ENCODE measurements at regions of chr7 and their contacts with region 1.

Region 1: GRCh38 chr7:131040467-131040932 is 287.2 kb upstream of the MKLN1 start:
- DNase-seq: no peak
- ATAC-seq: peak; percentile 83
- H3K4me3 ChIP-seq: no peak overlapping the region
- H3K27ac ChIP-seq: peak overlapping the region; percentile 72
- H3K4me1 ChIP-seq: peaks cover 22% of the 10 kb centered on the region
- H3K27me3 ChIP-seq: no peaks in the 10 kb centered on the region
- CTCF ChIP-seq: peak; percentile 84 to 96 (median 88)
- EP300 ChIP-seq: no peak
- POLR2A ChIP-seq: no peak
- RAD21 ChIP-seq: peak; percentile 97

Region 2: DNA sequence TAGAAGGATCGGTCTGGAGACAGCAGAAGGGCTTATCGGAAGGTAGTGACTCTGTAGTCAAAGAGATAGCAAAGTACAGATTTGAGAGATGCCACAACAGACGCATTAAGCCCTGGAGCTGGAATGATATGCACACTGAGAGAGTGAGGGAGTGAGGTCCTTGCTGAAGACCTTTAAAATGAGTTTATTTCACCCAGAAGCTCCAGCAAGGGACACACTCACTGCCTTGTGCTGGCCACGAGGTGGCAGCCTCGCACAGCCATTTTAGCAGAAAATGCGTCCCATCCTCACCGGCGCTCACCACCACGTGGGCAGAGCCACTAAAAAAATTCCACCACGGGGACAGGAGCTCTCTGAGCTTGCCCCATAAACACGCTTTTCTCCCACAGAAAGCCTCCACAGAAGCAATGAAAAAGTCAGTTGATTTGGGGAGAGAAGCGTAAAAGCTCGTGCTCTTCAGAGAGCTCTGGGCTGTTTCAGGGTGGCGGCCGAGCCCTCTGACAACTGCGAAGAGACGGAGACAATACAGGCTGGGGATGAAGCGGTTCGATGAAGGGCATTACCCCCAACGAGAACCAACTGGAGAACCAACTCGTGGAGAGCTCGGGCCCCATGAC is 143.5 kb before region 1 on chr7:
- CTCF ChIA-PET with region 1: interaction called, 166 read pairs
- POLR2A ChIA-PET with region 1: interaction called, 5 read pairs
- RAD21 ChIA-PET with region 1: interaction called, 77 read pairs
- SMC1A ChIA-PET with region 1: interaction called, 84 read pairs
- in situ Hi-C with region 1: loop called (anchors 5 kb)
- intact Hi-C with region 1: loop called (anchors 1 kb)
- DNase-seq: no peak
- ATAC-seq: peak; percentile 83
- H3K4me3 ChIP-seq: no peak overlapping the region
- H3K27ac ChIP-seq: no peak overlapping the region
- H3K4me1 ChIP-seq: peaks cover 51% of the 10 kb centered on the region
- H3K27me3 ChIP-seq: no peaks in the 10 kb centered on the region
- CTCF ChIP-seq: peak; percentile 75 to 87 (median 83)
- EP300 ChIP-seq: no peak
- POLR2A ChIP-seq: peak; percentile 57; the same call in 1 of the 2 replicates
- RAD21 ChIP-seq: peak; percentile 89

Region 3: DNA sequence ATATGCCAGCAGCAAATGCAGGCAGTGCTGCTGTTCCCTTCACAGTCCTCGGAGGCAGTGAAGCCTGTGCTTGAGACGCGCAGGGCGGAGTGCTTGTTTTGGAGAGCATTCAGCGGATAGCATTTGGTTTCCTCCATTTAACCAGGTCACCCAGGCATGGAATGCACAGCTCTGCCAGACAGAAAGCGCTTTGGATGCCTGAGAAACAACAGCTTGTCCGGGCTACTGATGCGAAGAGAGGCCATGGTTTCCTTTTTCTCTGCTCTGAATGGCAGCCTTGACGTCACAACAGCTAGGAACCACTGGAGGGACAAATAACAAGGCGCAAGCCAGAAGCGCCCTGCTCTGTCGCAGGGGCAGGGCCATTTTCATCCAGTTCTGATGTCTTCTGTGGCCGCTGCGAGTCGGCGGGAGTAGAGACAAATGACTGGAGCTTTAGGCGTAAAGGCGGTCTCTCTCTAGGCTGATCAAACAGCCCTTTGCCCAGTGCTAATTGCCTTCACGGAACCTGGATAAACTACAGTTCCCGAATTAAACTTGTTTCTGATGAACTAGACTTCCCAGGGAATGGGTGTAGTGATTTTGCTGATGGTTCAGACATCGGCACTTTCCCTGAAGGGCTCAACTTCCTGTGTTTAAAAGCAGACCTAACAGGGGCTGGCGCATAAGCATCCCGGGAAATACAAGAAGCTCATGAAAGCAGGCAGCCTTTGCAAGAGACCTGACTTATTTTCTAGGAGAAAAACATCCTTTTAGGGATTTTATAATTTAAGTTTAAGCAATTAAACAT is 118.9 kb before region 1 on chr7:
- CTCF ChIA-PET with region 1: interaction called, 12 read pairs
- POLR2A ChIA-PET with region 1: no interaction called
- RAD21 ChIA-PET with region 1: no interaction called
- SMC1A ChIA-PET with region 1: interaction called, 4 read pairs
- in situ Hi-C with region 1: no loop called
- intact Hi-C with region 1: no loop called
- DNase-seq: no peak
- ATAC-seq: no peak
- H3K4me3 ChIP-seq: no peak overlapping the region
- H3K27ac ChIP-seq: no peak overlapping the region
- H3K4me1 ChIP-seq: peaks cover 19% of the 10 kb centered on the region
- H3K27me3 ChIP-seq: no peaks in the 10 kb centered on the region
- CTCF ChIP-seq: no peak
- EP300 ChIP-seq: no peak
- POLR2A ChIP-seq: 0 out of 2 replicates have a peak, but pooled peaks have one; percentile 16
- RAD21 ChIP-seq: no peak

Region 4: GRCh38 chr7:130966246-130967009 is 74.1 kb before region 1 on chr7:
- CTCF ChIA-PET with region 1: interaction called, 69 read pairs
- POLR2A ChIA-PET with region 1: no interaction called
- RAD21 ChIA-PET with region 1: interaction called, 27 read pairs
- SMC1A ChIA-PET with region 1: interaction called, 59 read pairs
- in situ Hi-C with region 1: no loop called
- intact Hi-C with region 1: loop called (anchors 2 kb)
- DNase-seq: peak; percentile 45
- ATAC-seq: peak; percentile 85
- H3K4me3 ChIP-seq: no peak overlapping the region
- H3K27ac ChIP-seq: no peak overlapping the region
- H3K4me1 ChIP-seq: peaks cover 39% of the 10 kb centered on the region
- H3K27me3 ChIP-seq: no peaks in the 10 kb centered on the region
- CTCF ChIP-seq: no peak
- EP300 ChIP-seq: peak; percentile 52 to 74; a peak in 2 of 4 replicates
- POLR2A ChIP-seq: no peak
- RAD21 ChIP-seq: no peak

Region 5: DNA sequence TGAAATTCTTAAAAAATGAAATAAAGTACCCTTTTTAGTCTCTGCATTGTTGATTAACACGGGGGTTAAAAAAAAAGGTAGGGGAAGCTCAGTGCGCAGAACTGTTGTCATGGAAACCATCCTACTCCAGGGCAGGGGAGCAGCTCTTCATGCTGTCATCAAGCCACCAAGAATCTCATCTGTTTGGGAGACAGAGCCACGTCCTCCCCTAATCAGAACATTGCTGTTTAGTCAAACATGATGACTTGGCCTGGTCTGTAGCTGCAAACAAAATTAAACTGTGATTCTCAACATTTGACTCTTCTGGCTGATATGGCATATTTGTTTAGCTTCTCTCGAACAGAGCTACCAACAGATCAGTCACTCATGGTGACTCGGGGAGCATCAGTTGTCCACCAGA is 52.1 kb before region 1 on chr7:
- CTCF ChIA-PET with region 1: interaction called, 150 read pairs
- POLR2A ChIA-PET with region 1: no interaction called
- RAD21 ChIA-PET with region 1: interaction called, 80 read pairs
- SMC1A ChIA-PET with region 1: interaction called, 111 read pairs
- in situ Hi-C with region 1: no loop called
- intact Hi-C with region 1: no loop called
- DNase-seq: no peak
- ATAC-seq: no peak
- H3K4me3 ChIP-seq: no peak overlapping the region
- H3K27ac ChIP-seq: no peak overlapping the region
- H3K4me1 ChIP-seq: no peaks in the 10 kb centered on the region
- H3K27me3 ChIP-seq: no peaks in the 10 kb centered on the region
- CTCF ChIP-seq: no peak
- EP300 ChIP-seq: no peak
- POLR2A ChIP-seq: no peak
- RAD21 ChIP-seq: no peak

Region 6: DNA sequence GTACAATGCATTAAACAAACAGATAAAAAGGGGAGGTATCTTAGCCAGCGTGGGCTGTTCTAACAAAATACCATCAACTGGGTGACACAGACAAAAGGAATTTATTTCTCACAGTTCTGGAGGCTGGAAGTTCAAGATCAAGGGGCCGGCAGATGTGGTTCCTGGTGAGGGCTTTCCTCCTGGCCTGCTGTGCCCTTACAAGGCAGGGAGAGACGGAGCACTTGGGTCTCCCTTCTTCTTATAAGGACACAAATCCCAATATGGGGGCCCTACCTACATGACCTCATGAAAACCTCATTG is 24.9 kb before region 1 on chr7:
- CTCF ChIA-PET with region 1: interaction called, 21 read pairs
- POLR2A ChIA-PET with region 1: interaction called, 5 read pairs
- RAD21 ChIA-PET with region 1: interaction called, 18 read pairs
- SMC1A ChIA-PET with region 1: interaction called, 31 read pairs
- in situ Hi-C with region 1: no loop called
- intact Hi-C with region 1: no loop called
- DNase-seq: no peak
- ATAC-seq: no peak
- H3K4me3 ChIP-seq: no peak overlapping the region
- H3K27ac ChIP-seq: no peak overlapping the region
- H3K4me1 ChIP-seq: peaks cover 34% of the 10 kb centered on the region
- H3K27me3 ChIP-seq: no peaks in the 10 kb centered on the region
- CTCF ChIP-seq: no peak
- EP300 ChIP-seq: no peak
- POLR2A ChIP-seq: no peak
- RAD21 ChIP-seq: no peak

Region 7: GRCh38 chr7:131057015-131057793 is 16.7 kb after region 1 on chr7:
- CTCF ChIA-PET with region 1: interaction called, 11 read pairs
- POLR2A ChIA-PET with region 1: no interaction called
- RAD21 ChIA-PET with region 1: interaction called, 19 read pairs
- SMC1A ChIA-PET with region 1: interaction called, 9 read pairs
- in situ Hi-C with region 1: no loop called
- intact Hi-C with region 1: no loop called
- DNase-seq: no peak
- ATAC-seq: peak; percentile 75
- H3K4me3 ChIP-seq: no peak overlapping the region
- H3K27ac ChIP-seq: no peak overlapping the region; the same call in 1 of the 2 replicates
- H3K4me1 ChIP-seq: 0 out of 2 replicates have a peak, but pooled peaks cover 6% of the 10 kb centered on the region
- H3K27me3 ChIP-seq: no peaks in the 10 kb centered on the region
- CTCF ChIP-seq: no peak
- EP300 ChIP-seq: no peak
- POLR2A ChIP-seq: no peak
- RAD21 ChIP-seq: no peak